ENCODE measurements at regions of chr1 and their contacts with region 1.

Region 1: DNA sequence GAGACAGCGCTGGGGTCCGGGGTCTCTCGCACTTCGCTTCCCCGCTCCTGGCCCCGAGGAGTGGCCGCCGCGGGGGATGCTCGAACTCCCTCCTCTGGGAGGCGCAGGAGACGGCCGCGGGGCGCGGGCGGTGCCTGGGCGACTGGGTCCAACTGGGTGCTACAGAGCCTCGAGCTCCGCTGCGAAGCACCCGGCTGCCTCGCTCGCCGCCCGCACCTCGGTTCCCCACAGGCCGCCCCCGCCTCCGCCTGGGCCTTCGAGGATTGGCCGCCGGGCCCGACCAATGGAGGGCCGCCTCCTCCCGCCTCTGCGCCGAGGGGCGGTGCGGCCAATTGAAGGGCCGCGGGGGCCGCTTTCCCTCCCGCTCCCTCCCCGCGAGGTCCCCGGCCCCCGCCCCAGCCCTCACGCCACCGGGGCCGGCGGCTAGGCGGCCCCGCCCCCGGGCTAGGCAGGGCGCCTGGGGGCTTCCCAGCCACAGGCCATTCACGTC is at the start of gene CNN3:
- DNase-seq: peak; percentile 96
- H3K4me3 ChIP-seq: peak within 1 kb of the TSS; percentile 71 to 93 (median 80)
- H3K27ac ChIP-seq: peak within 1 kb of the TSS; percentile 98 to 100 (median 99)
- H3K4me1 ChIP-seq: peaks cover 30 to 67% (median 65%) of the 10 kb centered on the region in 4 donors
- H3K27me3 ChIP-seq: no peaks in the 10 kb centered on the region
- CTCF ChIP-seq: no peak
- EP300 ChIP-seq: no peak
- POLR2A ChIP-seq: peak; percentile 94
- total RNA-seq, gene CNN3: 140 to 268 (median 194) TPM

Region 2: DNA sequence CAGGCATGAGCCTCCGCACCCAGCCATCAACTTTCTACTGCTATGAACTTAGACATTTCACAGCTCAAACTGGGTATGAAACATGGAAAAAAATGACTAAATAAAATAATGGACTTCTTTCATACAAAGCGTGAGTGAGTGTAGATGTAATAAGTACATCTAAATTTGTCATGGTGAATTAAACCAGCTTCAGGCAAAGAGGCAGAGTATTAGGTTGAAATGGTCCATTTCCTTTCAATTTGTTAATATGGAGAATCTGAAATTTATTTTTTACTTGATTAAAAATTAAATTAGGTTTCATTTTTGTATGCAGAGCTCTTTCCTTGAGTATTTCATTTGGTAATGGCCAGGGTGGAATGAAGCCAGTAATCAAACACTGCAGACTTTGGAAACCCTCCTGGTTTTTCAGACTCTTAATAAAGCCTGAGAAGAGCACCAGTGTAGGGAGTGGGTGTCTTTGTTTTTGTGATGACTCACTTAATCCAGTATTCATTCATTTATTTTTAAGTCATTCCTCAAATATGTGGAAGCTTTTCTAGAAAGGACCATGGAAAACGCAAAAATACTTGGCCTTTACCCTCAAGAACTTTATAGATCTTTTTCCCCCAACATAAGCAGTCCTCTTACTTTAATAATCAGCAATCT is 96.6 kb after region 1 on chr1:
- intact Hi-C with region 1: loop called (anchors 5 kb)
- DNase-seq: peak; percentile 21
- H3K4me3 ChIP-seq: no peak overlapping the region
- H3K27ac ChIP-seq: peak overlapping the region; percentile 59 to 81 (median 76)
- H3K4me1 ChIP-seq: peaks cover 16 to 45% (median 41%) of the 10 kb centered on the region in 4 donors
- H3K27me3 ChIP-seq: no peaks in the 10 kb centered on the region
- CTCF ChIP-seq: no peak
- EP300 ChIP-seq: no peak
- POLR2A ChIP-seq: no peak

Measured in esophagus muscularis mucosa (tissue), 4 donors.